ENCODE measurements at regions of chr18 and their contacts with region 1.

Region 1: DNA sequence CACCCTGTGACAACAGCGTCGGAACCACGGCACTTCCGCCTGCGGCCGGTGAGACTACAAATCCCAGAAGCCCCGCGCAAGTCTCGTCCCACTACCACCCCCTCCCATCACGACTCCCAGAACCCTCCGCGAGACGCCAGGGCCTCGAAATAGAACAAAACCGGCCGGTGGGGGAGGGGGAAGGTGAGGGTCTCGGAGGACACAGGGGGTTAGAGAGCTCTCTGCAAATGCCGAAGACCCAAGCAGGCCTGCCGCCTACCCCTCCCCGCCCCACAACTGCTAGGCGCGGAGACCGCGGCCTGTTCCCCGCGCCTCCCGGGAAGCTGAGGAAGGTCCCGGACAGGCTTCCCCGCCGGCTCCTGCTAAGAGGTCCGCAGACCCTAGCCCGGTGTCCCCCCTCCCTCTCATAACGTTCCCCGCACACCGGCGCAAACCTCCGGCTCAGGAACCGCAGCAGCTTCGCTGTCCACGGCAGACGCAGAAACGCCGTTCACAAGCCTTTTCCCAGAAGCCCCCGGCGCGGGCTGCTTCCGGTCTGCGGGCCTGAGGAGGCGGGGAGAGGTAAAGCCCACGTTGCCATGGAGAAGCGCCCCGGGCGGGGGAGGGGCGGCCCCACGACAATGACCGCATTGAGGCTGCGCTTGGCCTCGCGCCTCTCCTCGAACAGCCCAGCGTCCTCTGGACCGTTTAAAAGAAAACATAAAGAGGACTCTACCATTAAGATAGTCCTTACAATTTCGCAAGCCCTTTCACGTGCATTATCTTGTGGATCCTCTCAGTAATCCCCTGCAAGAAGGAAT is at the start of gene ZNF24:
- DNase-seq: peak; percentile 97
- H3K4me3 ChIP-seq: peak within 1 kb of the TSS; percentile 88 to 99 (median 92)
- H3K27ac ChIP-seq: peak within 1 kb of the TSS; percentile 98 to 100 (median 99)
- H3K4me1 ChIP-seq: peaks cover 28 to 57% (median 44%) of the 10 kb centered on the region in 4 donors
- H3K27me3 ChIP-seq: no peaks in the 10 kb centered on the region
- CTCF ChIP-seq: no peak
- EP300 ChIP-seq: no peak
- POLR2A ChIP-seq: peak; percentile 79
- total RNA-seq, gene ZNF24: 31.2 to 41.1 (median 39.3) TPM

Region 2: GRCh38 chr18:35240664-35241447 is 103.3 kb before region 1 on chr18 and contains the start of gene ZNF397:
- intact Hi-C with region 1: loop called (anchors 5 kb)
- DNase-seq: peak; percentile 99
- H3K4me3 ChIP-seq: peak within 1 kb of the TSS; percentile 72 to 79 (median 75)
- H3K27ac ChIP-seq: peak within 1 kb of the TSS; percentile 89 to 99 (median 94)
- H3K4me1 ChIP-seq: peaks cover 10 to 24% (median 22%) of the 10 kb centered on the region in 4 donors
- H3K27me3 ChIP-seq: no peaks in the 10 kb centered on the region
- CTCF ChIP-seq: no peak
- EP300 ChIP-seq: no peak
- POLR2A ChIP-seq: peak; percentile 93
- total RNA-seq, gene ZNF397: 22.2 to 27.8 (median 24.9) TPM

Region 3: GRCh38 chr18:35290073-35290735 is 53.9 kb before region 1 on chr18 and contains the start of gene ZSCAN30:
- intact Hi-C with region 1: loop called (anchors 2 kb)
- DNase-seq: peak; percentile 98
- H3K4me3 ChIP-seq: peak within 1 kb of the TSS; percentile 62 to 84 (median 74)
- H3K27ac ChIP-seq: peak within 1 kb of the TSS; percentile 79 to 89 (median 84)
- H3K4me1 ChIP-seq: peaks cover 14 to 39% (median 34%) of the 10 kb centered on the region in 4 donors
- H3K27me3 ChIP-seq: no peaks in the 10 kb centered on the region
- CTCF ChIP-seq: no peak
- EP300 ChIP-seq: no peak
- POLR2A ChIP-seq: no peak
- total RNA-seq, gene ZSCAN30: 8.6 to 14.2 (median 10.2) TPM

Measured in esophagus muscularis mucosa (tissue), 4 donors.